HEK293T (cell line): ENCODE measurements at regions of chr2 and their contacts with region 1.

Region 1: DNA sequence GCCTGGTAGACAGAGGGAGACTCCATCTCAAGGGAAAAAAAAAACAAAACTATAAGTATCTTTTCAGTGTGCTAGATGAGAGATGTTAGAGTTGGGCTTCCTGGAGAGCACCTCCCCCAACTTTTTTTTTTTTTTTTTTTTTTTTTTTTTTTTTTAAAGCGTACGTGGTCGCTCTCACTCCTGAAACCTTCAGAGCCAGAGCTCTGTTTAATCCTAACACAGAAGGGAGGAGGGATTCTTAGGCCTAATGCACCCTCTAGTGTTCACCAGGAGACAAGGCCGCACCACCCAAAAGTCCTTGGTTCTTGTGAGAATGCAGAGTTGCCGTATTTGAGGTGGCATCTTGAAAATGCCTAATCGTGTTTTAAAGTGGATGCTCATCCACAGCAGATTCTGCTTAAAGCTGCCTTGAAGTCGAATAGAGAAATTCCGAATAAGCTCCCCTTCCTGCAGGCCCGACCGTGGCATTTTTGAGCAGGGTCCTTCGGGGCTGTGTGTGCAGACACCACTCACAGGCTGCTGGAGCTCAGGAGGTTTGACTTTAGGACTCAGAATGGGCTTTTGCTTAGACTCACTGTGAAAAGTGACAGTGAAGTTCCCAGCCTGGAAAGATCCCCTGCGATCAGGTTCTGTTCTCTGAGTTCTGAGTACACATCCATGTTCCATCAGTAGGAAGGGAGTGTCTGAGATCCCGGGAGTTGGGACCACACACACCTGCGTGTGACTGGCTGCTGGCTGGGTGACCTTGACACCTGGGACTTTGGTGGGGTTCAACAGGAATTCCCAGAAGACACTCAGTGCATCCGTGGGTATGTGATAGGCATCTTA is 252.6 kb downstream of the AGAP1 start:
- DNase-seq: peak; percentile 73

Region 2: DNA sequence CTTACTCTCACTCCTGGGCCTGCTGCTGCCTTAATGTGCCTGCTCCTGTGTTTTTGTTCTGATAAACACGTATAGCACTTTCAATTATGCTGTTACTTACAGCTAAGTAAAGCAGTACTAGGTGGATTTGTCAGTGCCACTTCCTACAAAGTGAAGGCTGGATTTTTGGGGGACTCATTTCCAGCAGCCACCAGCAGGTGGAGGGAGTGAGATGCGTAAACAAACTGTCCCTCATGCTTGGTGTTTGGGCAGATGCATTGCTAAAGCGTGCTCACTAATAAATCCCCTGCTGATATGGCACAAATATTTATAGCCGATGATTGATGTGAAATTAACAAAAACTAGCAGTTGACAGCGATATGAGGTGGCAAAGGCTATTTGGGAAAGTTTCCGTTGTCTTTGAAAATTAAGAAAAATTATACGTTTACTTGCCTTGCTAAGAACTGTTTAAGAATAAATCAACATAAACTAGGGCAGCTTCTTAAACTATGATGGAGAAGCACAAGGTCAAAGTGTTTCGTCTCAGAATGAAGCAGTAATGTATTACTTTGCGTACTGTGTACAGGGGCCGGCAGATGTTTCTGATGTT is 151.0 kb before region 1 on chr2:
- CTCF ChIA-PET with region 1: interaction called, 13 read pairs
- POLR2A ChIA-PET with region 1: no interaction called
- DNase-seq: peak; percentile 57

Region 3: DNA sequence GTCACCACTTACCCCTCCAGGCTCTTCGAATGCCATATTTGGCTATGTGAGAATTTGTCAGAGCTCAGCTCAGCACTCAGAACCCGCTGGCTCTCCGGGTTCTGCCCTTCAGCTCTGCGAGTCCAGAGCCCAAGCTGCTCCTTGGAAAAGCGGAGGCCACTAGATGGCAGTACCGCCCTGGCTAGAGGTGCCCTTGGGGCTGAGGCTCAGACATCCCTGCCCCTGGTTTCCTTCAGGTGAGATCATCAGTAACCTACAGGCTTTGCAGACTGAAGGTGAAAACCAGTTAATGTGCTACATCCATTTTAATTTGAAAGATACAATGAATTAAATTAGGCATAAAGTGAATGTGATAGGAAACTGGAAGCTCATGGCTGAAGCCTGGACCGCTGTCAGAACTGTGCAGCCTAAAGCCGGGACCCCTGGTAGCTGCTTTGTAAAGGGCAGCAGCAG is 33.0 kb after region 1 on chr2:
- CTCF ChIA-PET with region 1: no interaction called
- POLR2A ChIA-PET with region 1: no interaction called
- DNase-seq: peak; percentile 75

Region 4: DNA sequence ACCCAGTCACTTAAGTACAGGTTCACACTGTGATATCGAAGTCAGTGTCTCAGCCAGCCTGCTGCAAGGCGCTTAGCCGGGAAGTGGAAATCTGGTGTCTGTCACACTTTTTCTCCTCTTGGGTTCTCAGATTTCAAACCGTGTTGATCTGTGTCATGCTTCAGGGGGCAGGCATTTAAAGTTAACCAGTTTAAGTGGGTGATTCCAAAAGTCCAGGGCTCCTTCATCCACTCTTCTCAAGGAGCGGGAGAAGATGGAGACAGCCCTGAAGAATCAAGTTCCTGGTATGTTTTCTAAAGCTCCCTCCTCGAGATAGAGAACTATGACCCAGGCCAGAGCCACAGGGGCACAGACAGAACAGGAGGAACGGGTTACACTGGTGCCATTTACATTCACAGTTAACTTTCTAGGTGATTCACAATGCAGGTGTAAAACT is 90.0 kb after region 1 on chr2:
- CTCF ChIA-PET with region 1: no interaction called
- POLR2A ChIA-PET with region 1: no interaction called
- DNase-seq: no peak

Region 5: DNA sequence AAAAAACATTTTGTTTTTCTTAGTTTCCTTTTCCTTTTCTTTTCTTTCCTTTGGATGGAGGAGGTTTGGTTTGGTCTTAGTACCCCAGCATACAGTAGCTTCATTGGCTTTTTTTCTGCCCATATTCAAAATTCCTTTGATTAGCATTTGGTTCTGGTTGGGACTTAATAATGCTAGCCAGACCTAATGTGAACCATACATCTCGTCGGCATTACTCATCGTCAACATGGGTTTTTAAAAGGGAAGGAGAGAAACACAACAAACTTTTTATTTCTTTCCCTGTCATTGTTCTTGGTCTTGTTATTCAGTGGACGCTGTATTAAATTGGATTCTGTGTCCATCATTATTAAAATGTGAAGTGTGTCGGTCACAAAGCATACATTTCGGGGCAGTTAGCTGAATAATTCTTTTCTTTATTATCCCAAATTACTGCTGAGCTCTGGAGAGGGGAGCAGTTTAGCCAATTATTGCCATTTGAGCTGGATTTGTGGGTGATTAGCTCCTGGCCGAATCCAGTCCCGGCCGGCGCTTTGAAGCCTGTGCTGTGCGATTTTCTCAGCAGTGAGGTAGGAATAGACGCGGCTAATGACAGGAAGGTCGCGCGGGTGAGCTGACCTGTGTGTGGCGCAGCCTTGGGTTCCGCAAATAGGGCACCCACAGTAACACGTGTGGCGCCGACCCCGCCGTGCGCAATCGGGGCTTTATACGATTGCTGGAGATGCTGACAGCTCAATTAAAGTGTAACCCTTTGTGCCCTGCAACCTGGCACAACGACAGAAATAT is 118.5 kb after region 1 on chr2:
- CTCF ChIA-PET with region 1: no interaction called
- POLR2A ChIA-PET with region 1: no interaction called
- DNase-seq: no peak